ENCODE measurements at regions of chr7 and their contacts with region 1.

Region 1: GRCh38 chr7:27890205-27890849 is 150.4 kb downstream of the TAX1BP1 start:
- DNase-seq: no peak
- H3K4me3 Mint-ChIP-seq: no peak overlapping the region
- H3K27ac Mint-ChIP-seq: no peak overlapping the region
- H3K4me1 Mint-ChIP-seq: peaks cover 5% of the 10 kb centered on the region
- H3K27me3 Mint-ChIP-seq: peaks cover 24% of the 10 kb centered on the region

Region 2: DNA sequence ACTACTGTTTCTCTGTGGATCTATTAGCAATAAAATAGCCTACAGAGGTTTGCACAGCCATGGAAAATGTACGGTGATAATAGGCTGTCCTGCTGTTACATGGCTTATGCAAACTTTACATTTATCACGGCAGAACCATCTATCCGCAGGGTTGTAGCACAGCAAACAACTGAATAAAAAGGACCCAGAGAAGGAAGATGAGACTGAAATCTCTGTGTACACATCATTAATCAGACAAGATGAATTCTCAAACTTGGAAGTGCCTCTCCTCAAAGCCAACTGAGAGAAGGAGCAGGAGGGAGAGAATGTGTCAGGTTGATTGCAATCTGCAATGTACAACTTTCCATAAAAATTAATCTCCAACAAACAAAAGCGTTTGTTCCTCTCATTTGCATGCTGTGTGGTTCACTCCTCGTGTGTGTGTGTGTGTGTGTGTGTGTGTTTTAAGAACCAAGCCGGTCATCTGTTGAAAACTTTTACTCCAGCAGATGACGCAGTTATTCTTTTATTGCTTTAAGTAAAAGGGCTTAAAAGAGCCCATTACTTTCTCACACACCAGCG is 1305.2 kb before region 1 on chr7:
- intact Hi-C with region 1: no loop called
- DNase-seq: no peak
- H3K4me3 Mint-ChIP-seq: no peak overlapping the region
- H3K27ac Mint-ChIP-seq: no peak overlapping the region
- H3K4me1 Mint-ChIP-seq: no peaks in the 10 kb centered on the region
- H3K27me3 Mint-ChIP-seq: peaks cover 4% of the 10 kb centered on the region

Region 3: GRCh38 chr7:27808626-27809025 is 81.7 kb before region 1 on chr7:
- intact Hi-C with region 1: no loop called
- DNase-seq: no peak
- H3K4me3 Mint-ChIP-seq: no peak overlapping the region
- H3K27ac Mint-ChIP-seq: no peak overlapping the region
- H3K4me1 Mint-ChIP-seq: no peaks in the 10 kb centered on the region
- H3K27me3 Mint-ChIP-seq: no peaks in the 10 kb centered on the region

Region 4: DNA sequence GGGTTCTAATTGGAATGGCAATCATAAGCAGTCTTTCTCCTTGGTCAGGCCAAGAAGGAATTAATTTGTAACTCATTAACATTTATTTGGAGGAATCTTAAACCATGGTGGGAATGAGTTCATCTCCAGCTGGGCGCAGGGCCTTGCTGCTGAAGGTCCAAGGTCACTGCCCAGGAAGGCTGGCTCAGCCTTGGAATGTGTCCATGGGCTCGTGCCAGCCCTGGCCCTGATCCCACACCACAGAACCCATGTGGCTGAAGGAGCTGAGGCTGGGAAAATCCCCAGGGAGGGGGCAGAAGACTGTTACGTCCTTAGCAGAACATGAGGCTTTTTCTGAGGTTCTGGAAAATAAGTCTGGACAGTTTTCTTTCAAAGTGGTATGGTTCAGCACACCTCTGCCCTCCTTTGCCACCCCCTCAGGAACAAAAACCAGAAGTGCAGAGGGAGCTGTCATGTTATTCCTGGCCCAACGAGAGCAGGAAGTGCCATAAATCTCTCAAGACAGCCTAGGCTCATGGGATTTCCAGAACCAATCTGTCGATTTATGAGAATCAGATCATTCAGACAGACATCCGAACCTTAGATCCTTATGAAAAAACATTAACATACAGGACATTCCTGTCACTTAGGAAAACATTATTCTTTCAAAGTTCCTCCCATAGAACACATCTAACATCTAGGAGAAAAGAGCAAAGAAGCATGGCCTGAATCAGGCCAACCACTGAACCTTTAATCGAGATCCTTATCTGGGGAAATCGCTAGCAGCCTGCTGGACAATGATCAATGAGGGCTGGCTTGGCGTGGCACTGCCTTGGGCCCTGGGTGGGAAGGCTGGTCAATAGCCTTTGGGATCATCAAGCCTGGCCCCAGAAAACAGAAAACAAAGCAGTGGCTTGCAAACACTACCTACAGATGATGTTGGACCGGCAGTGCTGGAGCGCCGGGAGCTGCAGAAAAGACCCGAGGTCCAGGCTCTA is 16.1 kb before region 1 on chr7:
- intact Hi-C with region 1: loop called (anchors 2 kb)
- DNase-seq: no peak
- H3K4me3 Mint-ChIP-seq: no peak overlapping the region
- H3K27ac Mint-ChIP-seq: no peak overlapping the region
- H3K4me1 Mint-ChIP-seq: no peaks in the 10 kb centered on the region
- H3K27me3 Mint-ChIP-seq: peaks cover 7% of the 10 kb centered on the region

Region 5: GRCh38 chr7:27917774-27918314 is 27.5 kb after region 1 on chr7:
- intact Hi-C with region 1: no loop called
- DNase-seq: no peak
- H3K4me3 Mint-ChIP-seq: no peak overlapping the region
- H3K27ac Mint-ChIP-seq: no peak overlapping the region
- H3K4me1 Mint-ChIP-seq: no peaks in the 10 kb centered on the region
- H3K27me3 Mint-ChIP-seq: peaks cover 7% of the 10 kb centered on the region

Measured in activated T-helper 2 cell treated with anti-CD3 and anti-CD28 coated beads, Interferon-gamma antibody, Interleukin-2, Interleukin-4, amounts not matched to agents 10 μg/mL and 5 μg/mL and 100 μg/mL, durations not matched to agents 14 hours and 24 hours and 36 hours (primary cell).